ENCODE measurements at regions of chr7 and their contacts with region 1.

Region 1: DNA sequence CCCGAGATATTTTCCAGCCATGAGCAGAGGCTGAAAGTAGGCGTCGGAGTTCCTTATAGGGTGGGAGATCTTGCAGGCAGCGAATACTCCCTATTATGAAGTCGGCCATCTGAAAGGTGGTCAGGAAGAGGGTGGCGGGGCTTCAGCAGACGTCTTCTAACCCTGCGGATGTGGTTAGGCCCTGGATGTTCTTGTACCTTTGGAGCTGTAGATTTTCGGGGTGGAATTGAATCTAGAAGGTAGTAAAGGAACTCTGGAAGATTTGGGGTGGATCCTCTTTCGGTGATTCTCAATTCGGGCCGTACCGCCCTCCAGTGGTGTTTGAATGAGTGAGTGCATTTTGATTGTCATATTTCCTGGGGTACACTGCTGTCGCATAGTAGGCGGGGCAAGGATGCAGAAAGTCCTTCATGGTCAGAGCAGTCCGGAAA is 635 bp downstream of the NUP205 start:
- DNase-seq: peak; percentile 60
- ATAC-seq: peak; percentile 84

Region 2: DNA sequence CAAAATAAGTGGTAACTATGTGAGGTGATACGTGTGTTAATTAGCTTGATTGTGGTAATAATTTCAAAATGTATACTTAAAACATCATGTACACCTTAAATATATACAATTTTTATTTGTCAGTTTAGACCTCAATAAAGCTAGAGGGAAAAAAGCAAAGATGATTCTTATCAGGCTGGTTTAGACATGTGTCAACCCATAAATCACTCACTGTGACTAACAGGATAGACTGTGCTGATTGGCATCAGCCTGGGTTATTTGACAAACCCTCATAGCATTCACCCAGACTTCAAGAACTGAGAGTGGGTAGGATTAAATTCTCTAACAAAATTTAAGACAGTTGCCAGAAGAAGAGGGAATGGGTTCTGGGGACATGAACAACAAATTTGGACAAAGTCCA is 484.3 kb before region 1 on chr7:
- intact Hi-C with region 1: no loop called
- DNase-seq: no peak
- ATAC-seq: no peak

Region 3: DNA sequence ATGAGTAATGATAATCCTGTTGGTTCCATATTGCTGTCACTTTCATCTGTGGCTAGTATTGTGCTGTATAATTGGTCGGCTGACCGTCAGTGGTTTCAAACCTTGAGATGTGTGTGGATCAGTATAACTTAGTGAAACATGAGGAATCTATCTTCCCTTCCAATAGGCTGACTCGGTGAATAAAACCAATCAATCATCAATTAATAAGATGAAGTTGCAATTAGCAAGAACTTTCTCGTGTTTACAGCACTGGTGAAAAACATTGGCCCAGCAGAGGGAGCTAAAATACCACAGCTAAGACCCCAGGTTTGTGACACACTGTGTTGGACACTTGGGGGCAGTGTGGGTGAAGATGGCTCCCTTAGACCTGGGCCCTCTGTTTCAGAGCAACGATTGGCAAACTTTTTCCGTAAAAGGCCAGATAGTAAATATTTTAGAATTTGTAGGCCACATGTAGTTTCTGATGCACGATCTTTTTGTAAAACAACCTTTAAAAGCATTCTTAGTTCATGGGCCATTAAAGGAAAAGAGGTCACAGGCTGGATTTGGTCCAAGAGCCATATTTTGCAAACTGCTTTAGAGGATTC is 276.9 kb before region 1 on chr7:
- intact Hi-C with region 1: loop called (anchors 2 kb)
- DNase-seq: peak; percentile 68
- ATAC-seq: peak; percentile 98

Region 4: GRCh38 chr7:135509903-135510602 is 48.3 kb before region 1 on chr7 and contains the start of gene CNOT4:
- intact Hi-C with region 1: loop called (anchors 5 kb)
- DNase-seq: peak; percentile 97
- ATAC-seq: peak; percentile 98
- total RNA-seq, gene CNOT4: 26.7 TPM